GM10248 (cell line): ENCODE measurements at regions of chr11 and their contacts with region 1.

Region 1: DNA sequence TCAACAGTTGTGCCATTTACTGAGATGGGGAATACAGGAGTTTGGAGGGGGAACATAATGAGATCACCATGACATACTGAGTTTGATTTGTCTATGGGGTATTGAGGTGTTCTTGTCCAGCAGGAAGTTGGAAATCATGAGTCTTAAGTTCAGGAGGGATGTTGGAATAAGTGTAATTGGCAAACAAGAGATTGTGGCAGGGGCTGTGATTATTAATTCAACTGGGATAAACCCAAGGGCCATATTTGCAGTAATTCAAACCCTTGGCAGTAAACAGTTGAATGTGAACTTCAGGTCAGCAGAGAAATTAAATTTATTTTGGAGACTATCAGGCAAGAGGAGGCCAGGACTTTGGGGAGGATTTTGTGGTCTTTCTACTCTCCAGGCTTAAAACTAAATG is 33.4 kb downstream of the ADM start:
- DNase-seq: no peak
- CTCF ChIP-seq: no peak

Region 2: DNA sequence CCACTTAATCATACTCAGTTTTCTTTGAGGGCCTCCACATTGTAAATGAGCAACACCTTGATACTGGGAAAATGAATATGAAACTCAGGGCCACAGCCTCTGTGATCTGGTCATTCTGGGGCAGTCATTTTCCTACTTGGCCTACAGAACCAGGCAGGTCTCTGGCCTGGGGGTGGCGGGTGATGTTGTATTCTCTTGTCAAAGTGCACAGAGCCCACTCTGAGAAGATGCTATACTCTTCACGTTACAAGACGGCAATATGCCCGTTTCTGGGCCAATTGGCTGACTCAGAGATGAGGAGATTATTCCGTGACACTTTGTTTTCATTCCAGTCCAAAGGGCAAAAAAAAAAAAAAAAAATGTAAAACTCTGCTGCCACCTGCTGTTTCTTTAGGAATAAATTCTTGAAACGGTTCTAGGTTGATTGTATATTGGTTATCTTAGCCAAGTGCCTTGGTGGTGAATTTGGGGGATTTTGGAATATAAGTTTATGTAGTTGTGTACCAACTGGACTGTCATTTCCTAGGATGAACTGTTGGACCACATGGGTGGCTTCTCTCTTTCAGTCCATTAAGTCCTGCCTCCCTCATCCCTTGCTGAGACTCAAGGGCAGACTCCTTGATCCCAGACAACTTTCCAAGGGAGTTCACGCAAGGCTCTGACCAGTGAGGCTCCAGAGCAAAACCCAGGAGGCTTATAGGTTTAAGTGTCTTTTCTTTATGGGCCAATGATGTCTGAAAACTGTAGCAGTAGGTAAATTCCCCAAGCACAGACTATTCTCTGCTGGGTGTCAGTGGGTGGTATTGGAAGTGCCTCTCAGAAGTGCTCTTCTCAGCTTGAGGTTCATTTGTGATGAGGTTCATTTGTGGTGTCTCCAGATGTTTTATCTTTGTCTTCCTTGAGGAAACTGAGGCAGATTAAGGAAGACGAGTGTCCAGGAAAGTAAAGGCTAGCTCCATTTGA is 15.2 kb before region 1 on chr11:
- CTCF ChIA-PET with region 1: interaction called, 20 read pairs
- POLR2A ChIA-PET with region 1: no interaction called
- DNase-seq: peak; percentile 51
- CTCF ChIP-seq: peak; percentile 27